Pancreas (tissue), 10 donors: ENCODE measurements at regions of chr6 and their contacts with region 1.

Region 1: DNA sequence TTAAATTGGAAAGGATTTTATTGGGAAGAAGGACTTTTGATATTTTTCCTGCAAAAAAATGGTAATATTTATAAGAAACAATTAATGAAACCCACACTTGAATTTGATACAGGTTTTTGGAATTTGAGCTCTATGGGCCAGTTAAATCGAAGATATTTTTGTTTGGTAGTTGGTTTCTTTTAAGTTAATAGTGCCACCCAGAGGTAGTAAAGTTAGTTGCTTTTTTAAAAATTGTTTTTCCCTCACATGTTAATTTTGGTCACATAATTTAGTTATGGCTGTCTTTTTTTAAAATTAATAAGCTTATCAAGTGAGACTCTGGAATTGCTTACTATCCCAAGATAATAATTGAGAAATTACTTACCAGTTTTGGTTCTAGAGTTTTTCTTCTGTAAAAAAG is 7.1 kb downstream of the PRIM2 start:
- DNase-seq: no peak
- ATAC-seq: peak in 1 of 4 donors; percentile 48
- H3K4me3 ChIP-seq: no peak overlapping the region
- H3K27ac ChIP-seq: no peak overlapping the region
- H3K4me1 ChIP-seq: no peaks in the 10 kb centered on the region
- H3K27me3 ChIP-seq: no peaks in the 10 kb centered on the region
- CTCF ChIP-seq: no peak

Region 2: GRCh38 chr6:56914798-56915658 is 409.5 kb before region 1 on chr6:
- intact Hi-C with region 1: loop called in 1 of 3 experiments (anchors 10 kb)
- DNase-seq: no peak
- ATAC-seq: peak in 3 of 4 donors; percentile 39 to 72 (median 66)
- H3K4me3 ChIP-seq: no peak overlapping the region
- H3K27ac ChIP-seq: no peak overlapping the region
- H3K4me1 ChIP-seq: no peaks in the 10 kb centered on the region
- H3K27me3 ChIP-seq: peaks cover 0 to 5% (median 0%) of the 10 kb centered on the region in 4 donors
- CTCF ChIP-seq: no peak

Region 3: GRCh38 chr6:57182017-57182432 is 142.5 kb before region 1 on chr6:
- intact Hi-C with region 1: no loop called
- DNase-seq: no peak
- ATAC-seq: no peak
- H3K4me3 ChIP-seq: no peak overlapping the region
- H3K27ac ChIP-seq: no peak overlapping the region
- H3K4me1 ChIP-seq: peaks cover 0 to 8% (median 7%) of the 10 kb centered on the region in 3 donors
- H3K27me3 ChIP-seq: no peaks in the 10 kb centered on the region
- CTCF ChIP-seq: no peak